Left cardiac atrium (tissue), 4 donors: ENCODE measurements at regions of chr15 and their contacts with region 1.

Region 1: DNA sequence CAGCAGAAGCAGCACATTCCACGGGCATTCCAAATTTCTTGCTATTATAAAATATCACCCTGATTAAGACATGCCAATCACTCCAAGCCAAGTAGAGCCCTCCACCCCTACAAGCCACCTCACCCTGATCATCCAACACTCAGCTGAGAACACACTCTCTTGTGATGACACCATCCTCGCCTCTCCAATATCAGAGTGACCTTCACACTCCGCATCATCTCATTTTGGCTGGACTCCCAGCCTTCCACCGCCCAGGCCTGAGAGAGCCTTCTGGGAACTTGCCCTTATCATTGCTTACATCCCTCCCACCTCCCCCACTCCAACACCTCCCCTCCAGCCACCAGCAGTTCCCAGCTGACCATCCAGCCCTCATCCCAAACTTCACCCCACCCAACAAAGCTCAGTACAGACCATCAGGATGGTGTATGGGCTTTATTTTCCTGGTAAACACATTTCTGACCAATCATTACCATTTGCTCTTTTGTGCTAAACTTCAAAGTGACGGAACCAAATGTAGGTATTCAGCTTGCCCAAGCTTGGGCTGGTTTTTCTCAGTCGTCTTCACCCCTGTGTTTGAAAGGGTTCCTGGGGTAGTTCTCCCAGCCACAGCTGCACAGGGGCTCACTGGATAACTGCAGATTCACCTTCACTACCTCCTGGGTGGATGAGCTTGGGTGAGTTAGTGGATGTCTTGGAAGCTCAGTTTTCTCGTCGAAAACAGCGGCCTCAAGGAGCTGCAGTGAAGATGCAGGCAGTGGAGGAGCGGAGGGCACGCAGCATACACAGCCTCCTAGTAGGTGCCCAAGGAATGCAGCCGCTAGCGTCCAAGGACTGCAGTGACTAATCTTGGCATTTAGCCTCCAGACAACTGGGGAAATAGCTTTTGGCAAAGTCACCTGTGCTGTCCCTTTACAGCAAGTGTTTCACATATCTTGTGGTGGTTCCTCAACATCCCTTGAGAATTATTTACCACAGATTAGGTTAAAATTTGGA is 115.1 kb downstream of the LIPC start:
- DNase-seq: peak; percentile 76
- ATAC-seq: peak; percentile 91

Region 2: DNA sequence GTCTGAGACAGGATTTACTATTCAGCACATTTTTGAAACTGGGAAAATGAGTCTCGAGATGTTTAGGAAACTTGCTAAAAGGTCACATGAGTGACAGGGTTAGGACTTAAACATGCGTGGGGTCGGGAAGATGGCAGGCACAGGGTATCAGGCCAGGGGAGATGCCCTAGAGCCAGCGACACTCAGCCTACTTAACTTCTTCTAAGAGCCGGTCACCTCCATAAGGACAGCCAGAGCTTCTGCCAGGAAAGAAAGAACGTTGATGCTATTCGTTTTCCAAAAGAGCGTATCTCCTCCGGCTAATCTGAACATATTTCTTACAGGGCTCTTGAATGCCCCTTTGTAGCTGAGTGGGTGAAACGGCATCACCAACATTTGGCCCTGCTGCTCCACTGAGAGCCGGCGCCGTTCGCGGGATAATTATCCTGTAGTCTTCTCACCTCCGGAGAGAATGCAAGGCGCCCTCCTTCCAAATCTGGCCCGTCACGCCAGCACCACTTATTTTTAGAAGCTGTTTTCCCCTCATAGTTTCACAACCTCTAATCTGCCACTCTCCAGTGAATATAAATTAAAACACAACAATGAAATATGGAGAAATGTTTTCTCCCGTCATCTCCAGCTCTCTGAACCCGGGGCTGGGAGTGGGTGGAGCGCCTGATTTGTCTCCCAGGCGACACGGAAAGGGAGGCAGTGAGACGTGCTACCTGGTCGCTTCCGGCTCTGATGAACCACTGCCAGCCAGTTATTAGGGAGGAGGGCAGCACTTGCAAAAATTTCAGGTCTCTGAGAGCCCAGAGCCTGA is 56.6 kb before region 1 on chr15:
- intact Hi-C with region 1: loop called in 1 of 2 experiments (anchors 5 kb)
- DNase-seq: peak; percentile 76
- ATAC-seq: peak; percentile 75 to 76

Region 3: DNA sequence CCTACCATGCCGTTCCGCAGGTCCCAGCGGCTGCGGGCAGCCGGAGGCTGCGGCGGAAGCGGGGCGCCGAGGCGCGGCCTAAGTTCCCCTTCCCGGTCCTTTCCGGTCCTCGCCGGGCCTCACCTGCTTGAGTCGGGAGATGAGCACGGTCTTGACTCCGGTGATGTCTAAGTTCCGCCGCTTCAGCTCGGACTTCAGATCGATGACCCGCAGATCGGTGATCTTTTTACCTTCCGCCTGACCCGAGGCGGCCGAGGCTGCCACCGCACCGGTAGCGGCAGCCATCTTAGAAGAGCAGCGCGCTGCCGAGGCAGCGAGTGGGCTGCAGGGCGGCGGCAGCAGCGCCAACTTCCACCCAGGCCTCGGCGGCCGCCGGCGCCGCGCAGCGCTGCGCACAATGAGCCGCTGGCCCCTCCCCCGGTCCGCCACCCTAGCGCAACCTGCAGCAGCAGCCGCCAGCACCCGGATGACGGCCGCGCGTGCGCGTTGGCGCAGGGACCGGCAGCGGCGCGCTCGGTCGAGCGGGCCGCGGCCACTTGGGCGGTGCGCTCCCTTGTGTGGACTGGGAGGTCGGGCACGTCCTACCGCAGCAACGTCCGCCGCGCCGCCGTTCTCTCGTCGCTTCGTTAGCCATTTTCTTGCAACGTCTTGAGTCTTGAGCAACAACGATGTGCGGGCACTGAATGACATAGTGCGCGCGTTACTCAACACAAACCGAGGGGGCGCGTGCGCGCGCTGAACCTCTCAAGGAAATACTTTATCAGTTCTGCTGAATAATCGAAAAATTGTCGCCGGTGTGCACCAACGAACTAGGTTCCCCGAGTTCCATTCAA is 386.6 kb after region 1 on chr15 and contains the start of gene SLTM:
- intact Hi-C with region 1: no loop called
- DNase-seq: peak; percentile 95
- ATAC-seq: peak; percentile 98 to 99
- total RNA-seq, gene SLTM: 42.1 to 60.6 TPM